Activated CD4-positive, alpha-beta T cell treated with anti-CD3 and anti-CD28 coated beads, Interleukin-2, amount 10 ng/mL, durations not matched to agents 24 days and 14 days (primary cell): ENCODE measurements at regions of chr13 and their contacts with region 1.

Region 1: DNA sequence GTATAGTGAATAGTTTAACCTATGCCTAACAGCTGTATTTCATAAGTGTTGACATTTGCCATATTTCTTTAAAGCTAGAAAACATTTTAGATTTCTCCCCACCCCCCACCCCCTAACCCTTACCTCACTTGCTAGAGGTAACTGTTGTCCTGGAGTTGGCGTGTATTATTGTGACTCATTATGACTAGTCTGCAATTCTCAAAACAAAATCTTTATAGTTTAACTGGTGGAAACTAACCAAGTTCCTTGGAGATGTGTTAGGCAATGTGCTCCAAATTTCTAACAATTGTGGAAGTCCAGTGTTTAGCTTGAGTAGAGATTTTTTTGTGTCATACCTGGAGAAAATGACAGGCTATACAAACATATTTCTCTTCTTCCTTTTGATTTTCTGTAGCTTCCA is 38.0 kb downstream of the KCTD4 start:
- DNase-seq: no peak
- H3K4me3 Mint-ChIP-seq: no peak overlapping the region
- H3K27ac Mint-ChIP-seq: no peak overlapping the region
- H3K4me1 Mint-ChIP-seq: peaks cover 11% of the 10 kb centered on the region
- H3K27me3 Mint-ChIP-seq: no peaks in the 10 kb centered on the region

Region 2: GRCh38 chr13:45178349-45179162 is 15.7 kb after region 1 on chr13:
- intact Hi-C with region 1: loop called (anchors 2 kb)
- DNase-seq: peak; percentile 65
- H3K4me3 Mint-ChIP-seq: no peak overlapping the region
- H3K27ac Mint-ChIP-seq: no peak overlapping the region
- H3K4me1 Mint-ChIP-seq: peaks cover 17% of the 10 kb centered on the region
- H3K27me3 Mint-ChIP-seq: no peaks in the 10 kb centered on the region

Region 3: DNA sequence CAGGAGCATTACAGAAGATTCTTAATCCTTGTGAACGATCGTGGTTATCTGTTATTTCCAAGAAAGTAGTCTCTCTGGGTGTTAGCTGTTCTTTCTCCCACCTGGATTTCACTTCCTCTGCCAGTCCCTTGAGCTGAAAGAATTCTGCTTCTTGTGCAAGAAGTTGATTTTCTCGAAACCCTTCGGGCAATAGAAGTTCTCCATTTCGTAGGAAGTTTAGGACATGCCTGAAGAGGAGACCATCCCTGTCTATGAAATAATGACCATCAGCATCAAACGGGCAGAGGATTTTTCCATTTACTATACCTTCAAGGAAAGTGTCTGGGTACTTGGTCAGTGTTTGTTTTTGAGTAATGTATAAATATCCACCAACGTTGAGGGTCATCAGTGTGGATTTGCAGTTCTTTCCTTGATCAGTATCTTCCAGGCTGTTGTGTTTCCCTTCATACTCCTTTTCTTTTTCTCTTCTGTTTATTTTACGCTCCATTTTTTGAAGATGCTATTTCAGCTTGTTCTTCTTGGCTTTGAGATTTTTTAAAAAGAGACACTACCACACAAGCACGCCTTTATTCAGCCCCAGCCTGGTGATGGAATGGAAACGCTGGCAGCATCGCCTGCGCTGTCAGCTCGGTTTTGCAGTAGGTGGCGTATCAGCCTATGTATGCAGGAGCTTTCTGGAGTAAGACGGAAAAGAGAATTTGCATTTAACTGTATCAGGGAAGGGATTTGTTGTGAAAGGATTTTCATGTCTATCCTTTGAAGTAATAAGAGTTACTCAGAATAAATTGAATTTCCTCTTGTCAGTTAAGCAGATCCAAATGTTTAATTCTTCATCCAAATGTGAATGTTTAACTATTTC is 31.5 kb after region 1 on chr13:
- intact Hi-C with region 1: no loop called
- DNase-seq: no peak
- H3K4me3 Mint-ChIP-seq: no peak overlapping the region
- H3K27ac Mint-ChIP-seq: no peak overlapping the region
- H3K4me1 Mint-ChIP-seq: peaks cover 10% of the 10 kb centered on the region
- H3K27me3 Mint-ChIP-seq: no peaks in the 10 kb centered on the region